Vagina (tissue), 2 donors: ENCODE measurements at regions of chr5 and their contacts with region 1.

Region 1: GRCh38 chr5:61357745-61358144 is 25.7 kb downstream of the ZSWIM6 start:
- DNase-seq: no peak
- H3K4me3 ChIP-seq: no peak overlapping the region
- H3K27ac ChIP-seq: no peak overlapping the region
- H3K4me1 ChIP-seq: peaks cover 12% of the 10 kb centered on the region
- H3K27me3 ChIP-seq: no peaks in the 10 kb centered on the region
- CTCF ChIP-seq: no peak
- POLR2A ChIP-seq: no peak

Region 2: DNA sequence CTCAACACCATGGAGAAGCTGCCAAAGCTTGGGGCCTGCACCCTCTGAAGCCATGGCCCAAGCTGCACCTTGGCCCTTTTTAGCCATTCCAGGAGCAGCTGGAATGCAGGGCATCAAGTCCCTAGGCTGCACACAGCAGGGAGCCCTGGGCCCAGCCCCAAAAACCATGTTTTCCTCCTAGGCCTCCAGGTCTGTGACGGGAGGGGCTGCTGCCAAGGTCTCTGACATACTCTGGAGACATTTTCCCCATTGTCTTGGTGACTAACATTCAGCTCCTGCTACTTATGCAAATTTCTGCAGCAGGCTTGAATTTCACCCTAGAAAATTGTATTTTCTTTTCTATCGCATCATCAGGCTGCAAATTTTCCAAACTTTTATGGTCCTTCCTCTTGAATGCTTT is 578.3 kb before region 1 on chr5:
- intact Hi-C with region 1: loop called (anchors 5 kb)
- DNase-seq: no peak
- H3K4me3 ChIP-seq: no peak overlapping the region
- H3K27ac ChIP-seq: no peak overlapping the region
- H3K4me1 ChIP-seq: no peaks in the 10 kb centered on the region
- H3K27me3 ChIP-seq: no peaks in the 10 kb centered on the region
- CTCF ChIP-seq: no peak
- POLR2A ChIP-seq: no peak